SK-N-SH (cell line): ENCODE measurements at regions of chr1 and their contacts with region 1.

Region 1: DNA sequence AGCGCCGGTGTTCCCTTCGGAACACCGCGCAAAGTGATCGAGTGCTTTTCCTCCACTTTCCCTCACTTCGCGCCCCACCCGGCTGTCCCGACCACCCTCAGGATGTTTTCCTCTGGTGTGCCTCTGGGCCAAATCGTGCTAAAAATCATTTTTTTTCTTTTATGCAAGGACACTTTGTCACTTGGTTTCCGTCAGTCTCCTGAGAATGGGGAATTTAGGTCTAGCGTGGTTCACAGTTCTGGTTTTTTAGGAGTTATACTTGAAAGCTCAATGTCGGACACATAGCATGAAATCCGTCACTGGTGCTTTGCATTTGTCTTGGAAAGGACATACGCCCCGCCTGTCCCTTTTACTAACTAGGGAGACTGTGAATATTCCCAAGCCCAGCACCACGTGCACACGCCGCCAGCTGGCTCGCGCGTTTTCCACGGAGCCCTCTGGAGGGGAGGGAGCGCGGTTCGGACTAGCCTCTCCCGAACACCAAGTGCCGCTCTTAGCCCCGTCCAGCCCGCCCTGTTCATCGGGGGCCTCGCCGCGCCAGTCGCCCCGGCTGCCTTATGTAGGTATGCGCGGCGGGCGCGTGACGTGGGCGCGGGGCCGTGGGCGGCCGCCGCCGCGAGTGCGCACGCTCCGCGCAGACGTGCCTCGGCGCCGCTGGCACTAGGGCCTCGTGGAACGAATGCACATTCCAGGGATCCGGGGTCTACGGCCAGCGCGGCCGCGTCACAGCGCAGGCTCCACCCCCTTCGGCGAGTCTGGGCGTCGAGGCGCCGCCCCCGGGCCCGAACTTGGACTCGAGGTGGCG is 572 bp upstream of the IRF2BP2 start:
- DNase-seq: peak; percentile 92
- H3K4me3 ChIP-seq: peak overlapping the region; percentile 69 to 83
- H3K27ac ChIP-seq: peak overlapping the region; percentile 100
- H3K4me1 ChIP-seq: peaks cover 34 to 46% of the 10 kb centered on the region in 2 experiments
- H3K27me3 ChIP-seq: no peaks in the 10 kb centered on the region
- CTCF ChIP-seq: no peak
- EP300 ChIP-seq: peak in 1 of 2 experiments; percentile 52; a peak in 2 of 4 replicates
- RAD21 ChIP-seq: no peak

Region 2: DNA sequence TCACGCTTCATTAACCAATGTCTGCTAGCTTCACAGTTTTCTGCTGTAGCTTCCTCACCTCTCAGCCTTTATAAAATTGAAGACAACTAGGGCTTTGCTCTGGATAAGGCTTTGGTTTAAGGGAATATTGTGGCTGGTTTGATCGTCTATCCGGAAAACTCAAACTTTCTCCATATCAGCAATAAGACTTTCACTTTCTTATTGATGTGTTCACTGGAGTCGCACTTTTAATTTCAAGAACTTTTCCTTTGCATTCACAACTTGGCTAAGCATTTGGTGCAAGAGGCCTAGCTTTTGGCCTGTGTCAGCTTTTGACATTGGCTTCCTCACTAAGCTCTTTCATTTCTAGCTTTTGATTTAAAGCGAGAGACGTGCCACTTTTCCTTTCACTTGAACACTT is 224.4 kb before region 1 on chr1:
- CTCF ChIA-PET with region 1: no interaction called
- POLR2A ChIA-PET with region 1: no interaction called
- DNase-seq: no peak
- H3K4me3 ChIP-seq: no peak overlapping the region
- H3K27ac ChIP-seq: no peak overlapping the region
- H3K4me1 ChIP-seq: no peaks in the 10 kb centered on the region
- H3K27me3 ChIP-seq: no peaks in the 10 kb centered on the region
- CTCF ChIP-seq: no peak
- EP300 ChIP-seq: no peak
- RAD21 ChIP-seq: no peak

Region 3: DNA sequence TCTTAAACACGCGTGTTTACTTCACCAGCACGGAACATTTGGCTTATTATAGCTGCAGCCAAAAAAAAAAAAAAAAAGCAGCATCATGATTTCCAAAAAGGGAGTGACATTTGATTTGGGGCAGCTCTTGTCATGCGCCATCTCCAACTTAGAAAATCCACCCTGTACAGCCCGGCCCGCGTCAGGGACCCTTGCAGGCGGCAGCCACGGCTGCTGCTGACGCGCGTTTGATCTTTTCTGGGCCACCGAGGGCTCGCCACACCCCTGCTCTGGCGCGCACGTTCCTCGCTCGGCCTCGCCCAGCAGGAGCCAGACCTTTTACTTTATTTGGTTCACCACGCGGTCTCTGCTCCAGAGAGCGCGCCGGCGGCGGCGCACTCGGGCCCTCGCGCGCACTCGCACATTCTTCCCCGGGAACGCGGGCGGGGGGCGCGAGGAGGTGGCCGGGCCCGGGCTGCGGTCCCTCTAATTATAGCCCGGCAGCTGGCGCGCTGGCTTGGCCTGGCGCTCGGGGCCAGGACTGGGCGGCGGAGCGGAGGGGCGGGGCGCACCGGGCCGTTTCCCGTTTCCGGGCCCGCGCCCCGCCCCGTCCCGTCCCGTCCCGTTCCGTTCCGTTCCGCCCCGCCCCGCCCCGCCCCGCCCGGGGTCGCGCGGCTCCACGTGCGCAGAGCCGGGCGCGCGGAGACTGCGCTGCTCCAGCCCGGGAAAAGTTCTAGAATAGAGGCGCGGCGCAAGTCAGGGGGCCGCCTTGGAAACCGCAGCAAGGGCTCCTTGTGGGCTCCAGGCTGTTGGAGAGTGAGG is 10.7 kb before region 1 on chr1:
- CTCF ChIA-PET with region 1: interaction called, 11 read pairs
- POLR2A ChIA-PET with region 1: interaction called, 47 read pairs
- DNase-seq: peak; percentile 93
- H3K4me3 ChIP-seq: peak overlapping the region; percentile 52 to 57
- H3K27ac ChIP-seq: peak overlapping the region; percentile 98 to 100
- H3K4me1 ChIP-seq: peaks cover 39 to 58% of the 10 kb centered on the region in 2 experiments
- H3K27me3 ChIP-seq: no peaks in the 10 kb centered on the region
- CTCF ChIP-seq: 0 out of 2 replicates have a peak, but pooled peaks have one; percentile 5
- EP300 ChIP-seq: no peak
- RAD21 ChIP-seq: no peak

Region 4: DNA sequence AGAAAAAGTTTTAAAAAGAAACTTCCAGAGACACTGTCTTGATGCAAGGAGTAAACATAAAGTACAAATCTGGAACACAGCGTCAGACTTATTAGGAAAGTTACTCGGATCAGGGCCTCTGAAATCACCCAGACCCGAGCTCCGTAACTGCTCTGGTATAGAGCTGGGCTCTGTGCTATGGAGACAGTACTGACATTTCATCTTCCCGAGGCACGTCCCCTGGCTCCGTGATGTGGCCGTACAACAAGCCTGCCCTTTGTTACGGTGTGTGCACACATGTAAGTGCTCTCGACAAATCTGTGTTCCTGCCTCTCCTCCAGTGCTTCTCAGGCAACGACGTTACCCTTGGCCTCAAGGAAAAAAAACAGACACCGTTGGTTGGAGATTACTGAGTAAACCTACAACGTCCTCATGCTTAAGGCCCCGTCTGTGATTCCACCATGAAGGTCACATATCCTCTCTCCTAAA is 106.4 kb after region 1 on chr1:
- CTCF ChIA-PET with region 1: interaction called, 6 read pairs
- POLR2A ChIA-PET with region 1: interaction called, 17 read pairs
- DNase-seq: no peak
- H3K4me3 ChIP-seq: no peak overlapping the region
- H3K27ac ChIP-seq: no peak overlapping the region
- H3K4me1 ChIP-seq: peaks cover 12 to 36% of the 10 kb centered on the region in 2 experiments
- H3K27me3 ChIP-seq: no peaks in the 10 kb centered on the region
- CTCF ChIP-seq: no peak
- EP300 ChIP-seq: no peak
- RAD21 ChIP-seq: no peak

Region 5: GRCh38 chr1:234970731-234971476 is 360.4 kb after region 1 on chr1:
- CTCF ChIA-PET with region 1: interaction called, 3 read pairs
- POLR2A ChIA-PET with region 1: interaction called, 18 read pairs
- DNase-seq: peak; percentile 54
- H3K4me3 ChIP-seq: peak overlapping the region in 1 of 2 experiments; percentile 25; a peak in 1 of 4 replicates
- H3K27ac ChIP-seq: peak overlapping the region; percentile 89 to 98
- H3K4me1 ChIP-seq: peaks cover 32 to 42% of the 10 kb centered on the region in 2 experiments
- H3K27me3 ChIP-seq: no peaks in the 10 kb centered on the region
- CTCF ChIP-seq: no peak
- EP300 ChIP-seq: peak; percentile 1 to 32; a peak in 1 of 4 replicates
- RAD21 ChIP-seq: no peak

Region 6: DNA sequence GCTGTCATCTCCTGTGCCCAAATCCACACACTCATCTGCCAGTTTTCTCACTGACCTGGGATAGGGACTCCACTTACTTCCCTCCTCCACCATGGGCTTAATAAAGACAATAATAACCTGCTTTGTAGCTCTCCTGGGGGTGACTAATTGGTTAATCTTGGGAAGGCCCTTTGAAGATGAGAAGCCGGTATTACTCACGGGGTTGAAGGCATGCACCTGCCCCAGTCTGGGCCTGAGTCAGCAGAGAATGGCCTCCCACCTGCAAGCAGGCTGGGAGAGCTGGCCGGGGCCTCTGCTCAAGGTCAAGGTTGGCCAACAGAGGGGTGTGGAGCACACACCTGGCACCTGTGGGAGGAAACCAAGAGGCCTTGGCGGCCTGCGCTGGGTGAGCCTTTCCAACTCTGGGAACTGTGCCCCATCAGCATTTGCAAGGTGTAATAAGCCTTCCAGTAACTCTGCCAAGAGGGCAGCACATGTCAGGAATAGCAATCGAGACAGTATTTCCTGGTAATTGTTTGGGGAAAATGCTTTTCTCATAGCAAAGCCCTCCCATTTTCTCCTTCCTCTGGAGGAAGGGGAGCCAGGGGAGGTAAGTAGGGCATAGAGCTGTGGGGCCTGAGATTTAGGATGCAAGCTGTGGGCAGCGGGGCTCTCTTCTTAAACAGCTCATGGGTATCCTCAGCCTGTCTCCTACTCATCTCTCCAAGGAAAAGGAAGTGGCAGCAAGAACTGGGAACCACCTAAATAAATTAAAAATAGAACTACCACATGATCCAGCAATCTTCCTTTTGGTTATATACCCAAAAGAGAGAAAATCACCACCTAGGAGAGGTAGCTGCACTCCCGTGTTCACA is 469.1 kb after region 1 on chr1:
- CTCF ChIA-PET with region 1: interaction called, 46 read pairs
- POLR2A ChIA-PET with region 1: interaction called, 11 read pairs
- DNase-seq: no peak
- H3K4me3 ChIP-seq: no peak overlapping the region
- H3K27ac ChIP-seq: no peak overlapping the region
- H3K4me1 ChIP-seq: peaks cover 28 to 31% of the 10 kb centered on the region in 2 experiments; a peak in 3 of 4 replicates
- H3K27me3 ChIP-seq: no peaks in the 10 kb centered on the region
- CTCF ChIP-seq: no peak
- EP300 ChIP-seq: no peak
- RAD21 ChIP-seq: no peak